AG04450 (cell line): ENCODE measurements at regions of chr11 and their contacts with region 1.

Region 1: GRCh38 chr11:9534791-9535781 is 38.4 kb upstream of the WEE1 start:
- DNase-seq: no peak
- H3K4me3 ChIP-seq: no peak overlapping the region
- H3K27ac ChIP-seq: no peak overlapping the region
- H3K27me3 ChIP-seq: no peaks in the 10 kb centered on the region
- CTCF ChIP-seq: peak; percentile 74

Region 2: DNA sequence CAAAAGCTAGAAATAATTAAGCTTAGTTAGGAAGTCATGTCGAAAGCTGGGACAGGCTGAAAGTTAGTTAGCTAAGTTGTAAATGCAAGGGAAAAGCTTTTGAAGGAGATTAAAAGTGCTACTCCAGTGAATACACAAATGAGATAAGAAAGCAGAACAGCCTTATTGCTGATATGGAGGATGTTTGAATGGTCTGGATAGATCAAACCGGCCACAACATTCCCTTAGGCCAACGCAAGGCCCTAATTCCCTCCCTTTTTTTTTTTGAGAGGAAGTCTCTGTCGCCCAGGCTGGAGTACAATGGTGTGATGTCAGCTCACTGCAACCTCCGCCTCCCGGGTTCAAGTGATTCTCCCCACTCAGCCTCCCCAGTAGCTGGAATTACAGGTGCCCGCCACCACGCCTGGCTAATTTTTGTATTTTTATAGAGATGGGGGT is 15.1 kb after region 1 on chr11:
- CTCF ChIA-PET with region 1: interaction called, 12 read pairs
- POLR2A ChIA-PET with region 1: no interaction called
- DNase-seq: no peak
- H3K4me3 ChIP-seq: no peak overlapping the region
- H3K27ac ChIP-seq: no peak overlapping the region
- H3K27me3 ChIP-seq: no peaks in the 10 kb centered on the region
- CTCF ChIP-seq: no peak

Region 3: GRCh38 chr11:9565822-9566560 is 30.9 kb after region 1 on chr11:
- CTCF ChIA-PET with region 1: interaction called, 11 read pairs
- POLR2A ChIA-PET with region 1: interaction called, 4 read pairs
- DNase-seq: peak; percentile 100
- H3K4me3 ChIP-seq: peak overlapping the region; percentile 5; the same call in 1 of the 2 replicates
- H3K27ac ChIP-seq: peak overlapping the region; percentile 91
- H3K27me3 ChIP-seq: no peaks in the 10 kb centered on the region
- CTCF ChIP-seq: no peak

Region 4: GRCh38 chr11:9573052-9573774 is 38.1 kb after region 1 on chr11 and contains the start of gene WEE1:
- CTCF ChIA-PET with region 1: interaction called, 11 read pairs
- POLR2A ChIA-PET with region 1: interaction called, 6 read pairs
- DNase-seq: peak; percentile 95
- H3K4me3 ChIP-seq: peak within 1 kb of the TSS; percentile 82
- H3K27ac ChIP-seq: peak within 1 kb of the TSS; percentile 97
- H3K27me3 ChIP-seq: no peaks in the 10 kb centered on the region
- CTCF ChIP-seq: no peak
- polyA plus RNA-seq, gene WEE1: 27.2 and 44.8 TPM in 2 replicates

Region 5: GRCh38 chr11:9580894-9581293 is 45.8 kb after region 1 on chr11:
- CTCF ChIA-PET with region 1: interaction called, 11 read pairs
- POLR2A ChIA-PET with region 1: no interaction called
- DNase-seq: no peak
- H3K4me3 ChIP-seq: no peak overlapping the region
- H3K27ac ChIP-seq: no peak overlapping the region
- H3K27me3 ChIP-seq: no peaks in the 10 kb centered on the region
- CTCF ChIP-seq: no peak